T-cell (primary cell): ENCODE measurements at regions of chr13 and their contacts with region 1.

Region 1: GRCh38 chr13:102440259-102440936 is 38.5 kb upstream of the FGF14 start:
- DNase-seq: no peak
- ATAC-seq: no peak
- H3K4me3 ChIP-seq: no peak overlapping the region
- H3K4me3 Mint-ChIP-seq: no peak overlapping the region
- H3K27ac ChIP-seq: no peak overlapping the region
- H3K27ac Mint-ChIP-seq: no peak overlapping the region
- H3K4me1 ChIP-seq: no peaks in the 10 kb centered on the region
- H3K4me1 Mint-ChIP-seq: peaks cover 0 to 2% (median 0%) of the 10 kb centered on the region in 3 donors
- H3K27me3 ChIP-seq: peaks cover 0 to 11% of the 10 kb centered on the region in 2 experiments
- H3K27me3 Mint-ChIP-seq: peaks cover 27 to 37% of the 10 kb centered on the region in 2 donors

Region 2: GRCh38 chr13:101305981-101306411 is 1134.4 kb before region 1 on chr13:
- CTCF ChIA-PET with region 1: no interaction called
- POLR2A ChIA-PET with region 1: interaction called in 1 of 2 experiments, 11 read pairs
- DNase-seq: no peak
- ATAC-seq: no peak
- H3K4me3 ChIP-seq: no peak overlapping the region
- H3K4me3 Mint-ChIP-seq: no peak overlapping the region
- H3K27ac ChIP-seq: no peak overlapping the region
- H3K27ac Mint-ChIP-seq: no peak overlapping the region
- H3K4me1 ChIP-seq: no peaks in the 10 kb centered on the region
- H3K4me1 Mint-ChIP-seq: no peaks in the 10 kb centered on the region
- H3K27me3 ChIP-seq: peaks cover 0 to 8% of the 10 kb centered on the region in 2 experiments
- H3K27me3 Mint-ChIP-seq: peaks cover 0 to 2% of the 10 kb centered on the region in 2 donors

Region 3: GRCh38 chr13:102628559-102628958 is 188.2 kb after region 1 on chr13:
- CTCF ChIA-PET with region 1: no interaction called
- POLR2A ChIA-PET with region 1: no interaction called
- DNase-seq: no peak
- ATAC-seq: no peak
- H3K4me3 ChIP-seq: no peak overlapping the region
- H3K4me3 Mint-ChIP-seq: no peak overlapping the region
- H3K27ac ChIP-seq: no peak overlapping the region
- H3K27ac Mint-ChIP-seq: no peak overlapping the region
- H3K4me1 ChIP-seq: no peaks in the 10 kb centered on the region
- H3K4me1 Mint-ChIP-seq: peaks cover 0 to 5% (median 4%) of the 10 kb centered on the region in 3 donors
- H3K27me3 ChIP-seq: no peaks in the 10 kb centered on the region
- H3K27me3 Mint-ChIP-seq: no peaks in the 10 kb centered on the region

Region 4: GRCh38 chr13:103299079-103299478 is 858.7 kb after region 1 on chr13:
- CTCF ChIA-PET with region 1: no interaction called
- POLR2A ChIA-PET with region 1: no interaction called
- DNase-seq: no peak
- ATAC-seq: no peak
- H3K4me3 ChIP-seq: no peak overlapping the region
- H3K4me3 Mint-ChIP-seq: no peak overlapping the region
- H3K27ac ChIP-seq: no peak overlapping the region
- H3K27ac Mint-ChIP-seq: no peak overlapping the region
- H3K4me1 ChIP-seq: no peaks in the 10 kb centered on the region
- H3K4me1 Mint-ChIP-seq: no peaks in the 10 kb centered on the region
- H3K27me3 ChIP-seq: no peaks in the 10 kb centered on the region
- H3K27me3 Mint-ChIP-seq: no peaks in the 10 kb centered on the region